Naive thymus-derived CD8-positive, alpha-beta T cell (primary cell): ENCODE measurements at regions of chr11 and their contacts with region 1.

Region 1: GRCh38 chr11:122655527-122656072 is at the start of gene UBASH3B:
- DNase-seq: peak; percentile 29 to 69 (median 48)
- ATAC-seq: peak; percentile 72 to 79
- H3K4me3 Mint-ChIP-seq: peak within 1 kb of the TSS; percentile 92 to 100 (median 98)
- H3K27ac Mint-ChIP-seq: peak within 1 kb of the TSS; percentile 85 to 97 (median 96)
- H3K4me1 Mint-ChIP-seq: peaks cover 27 to 54% (median 45%) of the 10 kb centered on the region in 4 donors
- H3K27me3 Mint-ChIP-seq: no peaks in the 10 kb centered on the region
- polyA plus RNA-seq, gene UBASH3B: 6.8 to 12.8 (median 7.1) TPM

Region 2: DNA sequence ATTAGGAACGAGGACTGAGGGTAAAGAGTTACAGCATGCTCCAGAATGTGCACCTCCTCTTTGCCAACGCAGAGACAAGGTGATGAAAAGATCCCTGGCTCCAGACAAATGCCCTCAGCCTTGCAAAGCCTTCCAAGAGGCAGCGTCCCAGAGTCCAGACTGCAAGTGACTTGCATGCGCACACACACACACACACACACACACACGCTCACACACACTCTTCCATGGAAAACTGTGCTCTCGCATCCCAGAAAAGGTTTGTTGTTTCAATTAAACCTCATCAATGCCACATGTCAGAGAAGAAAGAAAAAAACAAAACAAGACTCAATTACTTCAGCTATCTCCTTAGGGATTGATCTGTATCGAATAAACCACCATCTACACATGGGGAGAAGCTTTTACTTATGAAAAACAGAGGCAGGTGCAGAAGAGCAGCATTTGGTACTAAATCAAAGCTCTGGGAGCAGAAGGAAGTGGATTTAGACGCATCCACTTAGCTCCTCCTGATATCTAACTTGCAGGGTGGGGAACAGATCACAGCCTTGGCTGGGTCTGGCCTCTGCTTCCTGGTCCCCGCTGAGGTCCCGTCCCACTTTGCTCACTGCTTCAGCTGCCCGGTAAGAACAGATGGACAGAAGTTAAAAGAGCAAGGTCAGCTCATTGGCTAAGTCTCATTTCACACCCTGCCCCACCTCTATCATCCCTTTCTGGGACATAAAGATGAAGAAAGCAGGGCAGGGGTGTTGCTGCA is 289.8 kb before region 1 on chr11:
- POLR2A ChIA-PET with region 1: no interaction called
- DNase-seq: no peak
- ATAC-seq: no peak
- H3K4me3 Mint-ChIP-seq: no peak overlapping the region
- H3K27ac Mint-ChIP-seq: no peak overlapping the region
- H3K4me1 Mint-ChIP-seq: no peaks in the 10 kb centered on the region
- H3K27me3 Mint-ChIP-seq: peaks cover 4 to 12% (median 7%) of the 10 kb centered on the region in 5 donors

Region 3: GRCh38 chr11:122668562-122669090 is 13.0 kb after region 1 on chr11:
- POLR2A ChIA-PET with region 1: interaction called, 51 read pairs
- DNase-seq: peak in 4 of 10 donors; percentile 28 to 59 (median 44)
- ATAC-seq: peak; percentile 52 to 80
- H3K4me3 Mint-ChIP-seq: peak overlapping the region in 9 of 10 donors; percentile 19 to 77 (median 56)
- H3K27ac Mint-ChIP-seq: peak overlapping the region; percentile 79 to 95 (median 91)
- H3K4me1 Mint-ChIP-seq: peaks cover 46 to 95% (median 84%) of the 10 kb centered on the region in 4 donors
- H3K27me3 Mint-ChIP-seq: no peaks in the 10 kb centered on the region

Region 4: GRCh38 chr11:122673701-122674100 is 18.1 kb after region 1 on chr11:
- POLR2A ChIA-PET with region 1: interaction called, 51 read pairs
- DNase-seq: peak in 1 of 10 donors; percentile 15
- ATAC-seq: no peak
- H3K4me3 Mint-ChIP-seq: peak overlapping the region in 5 of 10 donors; percentile 12 to 70 (median 22)
- H3K27ac Mint-ChIP-seq: peak overlapping the region in 7 of 10 donors; percentile 43 to 94 (median 77)
- H3K4me1 Mint-ChIP-seq: peaks cover 42 to 94% (median 85%) of the 10 kb centered on the region in 4 donors
- H3K27me3 Mint-ChIP-seq: no peaks in the 10 kb centered on the region

Region 5: GRCh38 chr11:122690801-122691548 is 35.4 kb after region 1 on chr11:
- POLR2A ChIA-PET with region 1: interaction called, 66 read pairs
- DNase-seq: peak in 3 of 10 donors; percentile 30 to 37 (median 31)
- ATAC-seq: peak; percentile 61 to 68
- H3K4me3 Mint-ChIP-seq: peak overlapping the region; percentile 37 to 83 (median 80)
- H3K27ac Mint-ChIP-seq: peak overlapping the region; percentile 87 to 96 (median 93)
- H3K4me1 Mint-ChIP-seq: peaks cover 47 to 86% (median 80%) of the 10 kb centered on the region in 4 donors
- H3K27me3 Mint-ChIP-seq: no peaks in the 10 kb centered on the region

Region 6: GRCh38 chr11:122727101-122727929 is 71.7 kb after region 1 on chr11:
- POLR2A ChIA-PET with region 1: interaction called, 14 read pairs
- DNase-seq: peak in 6 of 10 donors; percentile 9 to 55 (median 32)
- ATAC-seq: peak; percentile 78 to 79
- H3K4me3 Mint-ChIP-seq: peak overlapping the region; percentile 76 to 97 (median 86)
- H3K27ac Mint-ChIP-seq: peak overlapping the region; percentile 93 to 99 (median 98)
- H3K4me1 Mint-ChIP-seq: peaks cover 45 to 86% (median 79%) of the 10 kb centered on the region in 4 donors
- H3K27me3 Mint-ChIP-seq: no peaks in the 10 kb centered on the region

Region 7: DNA sequence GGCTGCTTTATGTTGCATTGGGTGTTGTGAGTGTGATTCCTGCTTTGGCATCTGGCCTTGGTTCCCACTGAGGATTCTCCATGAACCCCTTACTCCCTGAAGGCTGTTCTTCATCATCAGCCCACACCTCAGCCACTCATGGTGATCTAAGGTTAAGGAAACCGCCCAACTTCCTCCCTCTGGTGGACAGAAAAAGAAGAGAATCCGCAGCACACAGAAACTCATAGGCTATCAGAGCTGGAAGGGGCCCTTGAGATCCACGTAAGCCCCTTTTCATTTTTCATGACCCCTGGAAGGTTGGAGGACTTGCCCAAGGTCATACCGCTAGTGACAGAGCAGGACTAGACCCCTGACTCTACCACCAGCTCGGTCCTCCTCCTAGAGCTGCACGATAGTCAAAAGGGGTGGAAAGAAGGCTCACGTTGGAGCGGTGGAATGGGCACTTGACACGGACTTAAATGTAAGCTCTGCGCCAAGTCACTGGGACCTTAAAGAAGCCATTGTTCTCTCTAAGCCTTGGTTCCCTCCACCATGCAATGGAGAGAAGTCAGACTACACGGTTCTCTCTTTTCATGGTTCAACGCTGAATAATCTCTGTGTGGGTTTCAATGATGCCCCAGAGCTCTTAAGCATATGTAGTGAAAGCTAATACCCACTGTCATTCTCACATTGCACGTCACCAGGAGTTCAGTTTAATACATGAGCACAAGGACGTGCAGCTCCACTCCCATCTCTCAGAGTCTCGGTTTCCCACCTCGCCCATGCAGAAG is 99.1 kb after region 1 on chr11:
- POLR2A ChIA-PET with region 1: interaction called, 50 read pairs
- DNase-seq: peak in 8 of 10 donors; percentile 12 to 68 (median 44)
- ATAC-seq: peak; percentile 56 to 58
- H3K4me3 Mint-ChIP-seq: peak overlapping the region in 1 of 10 donors; percentile 9
- H3K27ac Mint-ChIP-seq: peak overlapping the region in 7 of 10 donors; percentile 9 to 87 (median 67)
- H3K4me1 Mint-ChIP-seq: peaks cover 28 to 82% (median 68%) of the 10 kb centered on the region in 4 donors
- H3K27me3 Mint-ChIP-seq: no peaks in the 10 kb centered on the region